Activated CD8-positive, alpha-beta T cell treated with anti-CD3 and anti-CD28 coated beads, Interleukin-2, amount 10 ng/mL, durations not matched to agents 7 days and 5 days (primary cell): ENCODE measurements at regions of chr14 and their contacts with region 1.

Region 1: GRCh38 chr14:71103662-71104484 is 196.6 kb downstream of the PCNX1 start:
- DNase-seq: peak; percentile 44
- ATAC-seq: peak; percentile 60
- H3K4me3 Mint-ChIP-seq: no peak overlapping the region
- H3K27ac Mint-ChIP-seq: no peak overlapping the region
- H3K4me1 Mint-ChIP-seq: no peaks in the 10 kb centered on the region
- H3K27me3 Mint-ChIP-seq: no peaks in the 10 kb centered on the region

Region 2: GRCh38 chr14:71138448-71139293 is 34.8 kb after region 1 on chr14:
- CTCF ChIA-PET with region 1: interaction called, 11 read pairs
- POLR2A ChIA-PET with region 1: no interaction called
- DNase-seq: peak; percentile 67
- ATAC-seq: peak; percentile 20
- H3K4me3 Mint-ChIP-seq: no peak overlapping the region
- H3K27ac Mint-ChIP-seq: peak overlapping the region; percentile 5
- H3K4me1 Mint-ChIP-seq: peaks cover 52% of the 10 kb centered on the region
- H3K27me3 Mint-ChIP-seq: no peaks in the 10 kb centered on the region